Thyroid gland (tissue), 4 donors: ENCODE measurements at regions of chr12 and their contacts with region 1.

Region 1: DNA sequence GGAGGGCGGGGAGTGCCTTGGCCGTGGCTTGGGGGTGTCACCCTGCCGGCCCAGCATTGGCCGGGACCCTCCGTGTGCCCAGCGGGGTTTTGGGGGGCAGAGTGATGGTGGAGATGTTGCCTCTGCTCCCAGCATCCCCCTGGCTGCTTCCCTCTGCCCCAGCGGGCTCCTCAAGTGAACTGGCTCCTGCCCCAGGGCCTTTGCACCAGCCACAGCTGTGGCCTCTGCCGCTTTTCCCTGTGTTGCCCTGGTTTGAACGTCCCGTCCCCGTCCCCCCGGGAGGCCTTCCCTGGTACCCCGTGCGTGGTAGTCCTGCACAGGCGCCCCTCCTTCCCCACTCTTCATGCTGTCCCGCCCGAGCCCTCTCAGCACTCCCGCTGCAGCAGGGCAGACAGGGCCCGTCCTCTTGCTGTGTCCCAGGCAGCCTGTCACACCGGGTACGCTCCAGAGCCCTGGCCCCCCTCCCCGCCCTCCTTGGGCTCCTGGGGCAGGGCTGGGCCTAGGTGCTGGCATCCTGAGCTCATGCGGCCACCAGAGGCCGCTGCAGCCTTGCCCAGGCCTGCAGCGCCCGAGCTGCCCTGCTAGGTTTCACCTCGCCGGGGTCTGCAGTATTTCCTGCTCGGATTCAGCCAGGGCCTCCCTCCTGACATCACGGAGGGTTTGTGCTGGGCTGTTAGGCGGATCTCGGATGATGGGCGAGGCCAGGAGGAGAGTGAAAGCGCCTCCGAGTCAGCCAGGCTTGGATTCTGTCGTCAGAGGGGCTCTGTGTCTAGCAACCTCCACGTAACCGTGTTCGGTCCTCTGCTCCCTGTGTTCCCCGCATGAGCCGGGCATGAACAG is 9.5 kb downstream of the NOC4L start:
- DNase-seq: peak; percentile 86 to 89
- H3K4me3 ChIP-seq: peak overlapping the region in 1 of 3 donors; percentile 10
- H3K27ac ChIP-seq: no peak overlapping the region
- H3K4me1 ChIP-seq: peaks cover 0 to 8% of the 10 kb centered on the region in 2 donors
- H3K27me3 ChIP-seq: no peaks in the 10 kb centered on the region
- CTCF ChIP-seq: peak; percentile 87 to 98 (median 93)
- POLR2A ChIP-seq: no peak

Region 2: GRCh38 chr12:132285991-132286681 is 132.4 kb after region 1 on chr12:
- intact Hi-C with region 1: no loop called
- DNase-seq: peak; percentile 96
- H3K4me3 ChIP-seq: no peak overlapping the region
- H3K27ac ChIP-seq: peak overlapping the region in 2 of 3 donors; percentile 46 to 66
- H3K4me1 ChIP-seq: peaks cover 16 to 45% of the 10 kb centered on the region in 2 donors
- H3K27me3 ChIP-seq: no peaks in the 10 kb centered on the region
- CTCF ChIP-seq: no peak
- POLR2A ChIP-seq: no peak

Region 3: DNA sequence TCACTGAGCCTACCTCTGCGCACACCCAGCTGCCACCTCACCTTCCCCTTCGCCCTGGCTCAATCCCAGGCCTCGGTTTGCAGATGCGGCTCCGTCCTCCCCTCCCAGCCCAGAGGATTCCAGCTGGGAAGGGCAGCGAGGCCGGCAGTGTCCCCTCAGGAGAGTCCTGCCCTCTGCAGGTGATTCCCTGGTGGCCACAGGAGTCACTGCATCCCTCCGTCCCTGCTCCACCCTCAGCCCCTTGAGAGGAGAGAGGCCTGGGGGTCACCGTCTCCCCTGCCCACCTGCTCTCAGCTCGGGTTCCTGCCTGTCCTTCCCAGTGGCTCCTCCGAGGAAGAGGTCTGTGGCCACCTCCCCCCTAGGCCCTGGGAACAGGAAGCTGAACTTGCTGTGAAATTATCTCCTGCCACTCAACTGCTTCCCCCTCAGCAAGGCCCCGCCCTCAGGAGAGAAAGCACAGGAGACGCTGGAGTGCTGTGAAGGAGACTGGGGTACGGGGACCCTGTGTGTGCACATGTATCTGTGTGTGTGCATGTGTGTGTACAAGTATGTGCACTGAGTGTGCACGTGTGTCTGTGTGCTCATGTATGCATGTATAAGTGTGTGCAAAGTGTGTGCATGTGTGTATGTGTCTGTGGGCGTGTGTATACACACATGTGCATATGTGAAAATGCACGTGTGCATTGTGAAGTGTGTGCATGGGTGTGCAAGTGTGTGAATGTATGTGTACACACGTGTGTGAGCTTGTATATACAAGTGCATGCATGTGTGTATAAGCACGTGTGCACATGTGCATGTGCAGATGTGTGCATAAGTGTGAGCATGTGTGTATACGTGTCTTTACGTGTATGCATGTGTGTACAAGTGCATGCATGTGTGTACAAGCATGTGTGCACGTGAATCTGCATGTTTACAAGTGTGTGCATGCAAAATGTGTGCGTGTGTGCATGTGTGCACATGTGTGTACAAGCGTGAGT is 188.8 kb after region 1 on chr12:
- intact Hi-C with region 1: loop called (anchors 5 kb)
- DNase-seq: peak in 1 of 2 donors; percentile 22
- H3K4me3 ChIP-seq: no peak overlapping the region
- H3K27ac ChIP-seq: no peak overlapping the region
- H3K4me1 ChIP-seq: no peaks in the 10 kb centered on the region
- H3K27me3 ChIP-seq: no peaks in the 10 kb centered on the region
- CTCF ChIP-seq: peak in 4 of 6 experiments; percentile 46 to 67 (median 58)
- POLR2A ChIP-seq: no peak

Region 4: DNA sequence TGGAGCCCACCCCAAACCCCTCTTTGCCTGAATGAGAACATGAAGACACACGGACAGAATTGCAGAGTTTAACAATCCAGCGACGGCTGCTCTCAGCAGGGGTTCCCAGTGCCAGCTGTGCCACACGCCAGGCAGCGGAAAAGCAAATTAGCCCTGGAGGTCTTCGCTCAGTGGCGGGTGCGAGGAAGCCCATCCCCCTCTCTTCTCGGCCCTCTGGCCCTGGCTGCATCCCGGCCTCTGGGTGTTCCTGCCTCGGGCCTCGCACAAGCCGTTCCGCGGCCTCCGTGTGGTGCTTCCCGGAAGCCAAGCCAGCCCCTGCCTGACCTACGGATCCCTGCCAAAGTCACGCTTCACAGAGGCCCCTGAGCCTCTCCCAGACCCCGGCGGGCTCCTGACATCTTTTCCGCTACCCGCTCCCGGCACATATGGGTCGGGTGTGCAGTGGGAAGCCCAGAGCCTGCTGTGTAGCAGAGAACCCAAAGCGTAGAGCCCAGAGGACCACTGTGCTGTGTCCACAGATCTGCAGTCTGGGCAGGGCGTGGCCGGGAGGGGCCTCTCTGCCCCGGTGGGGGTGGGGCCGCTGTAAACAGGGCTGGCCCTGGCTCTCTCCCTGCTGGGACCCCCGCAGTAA is 246.4 kb after region 1 on chr12:
- intact Hi-C with region 1: loop called (anchors 10 kb)
- DNase-seq: no peak
- H3K4me3 ChIP-seq: no peak overlapping the region
- H3K27ac ChIP-seq: no peak overlapping the region
- H3K4me1 ChIP-seq: no peaks in the 10 kb centered on the region
- H3K27me3 ChIP-seq: no peaks in the 10 kb centered on the region
- CTCF ChIP-seq: no peak
- POLR2A ChIP-seq: no peak

Region 5: DNA sequence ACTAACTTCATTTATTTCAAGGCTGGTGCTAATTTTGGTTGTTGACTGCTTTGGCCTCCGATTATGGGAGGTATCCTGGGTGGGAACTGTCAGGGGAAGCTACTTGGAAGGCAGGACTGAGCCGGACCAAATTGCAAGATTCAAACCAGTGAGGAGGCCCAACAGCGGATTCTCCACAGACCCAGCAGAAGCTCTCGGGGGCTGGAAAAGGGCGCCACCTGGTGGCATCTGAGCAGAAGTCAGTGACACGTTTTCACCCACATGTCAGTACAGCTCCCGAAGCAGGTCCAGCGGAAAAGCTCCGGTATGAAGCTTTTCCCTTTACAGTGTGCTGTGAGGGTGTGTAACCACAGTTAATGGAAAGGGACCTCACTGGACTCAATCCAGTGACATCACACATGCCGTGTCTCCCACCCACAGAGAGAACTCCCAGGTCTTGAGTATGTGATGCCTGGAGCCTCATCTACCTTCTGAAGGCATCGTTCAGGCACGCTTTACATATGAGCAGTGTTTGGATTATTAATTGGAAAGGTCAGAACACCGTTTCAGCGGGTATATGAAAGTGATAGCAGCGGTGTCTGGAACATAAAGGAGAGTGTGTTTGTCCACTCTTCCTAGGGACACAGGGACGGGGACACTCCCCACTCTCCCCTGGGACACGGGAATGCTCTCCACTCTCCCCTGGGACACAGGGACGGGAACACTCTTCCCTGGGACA is 461.3 kb after region 1 on chr12:
- intact Hi-C with region 1: loop called (anchors 10 kb)
- DNase-seq: peak; percentile 76 to 84
- H3K4me3 ChIP-seq: no peak overlapping the region
- H3K27ac ChIP-seq: no peak overlapping the region
- H3K4me1 ChIP-seq: peaks cover 5 to 11% of the 10 kb centered on the region in 2 donors
- H3K27me3 ChIP-seq: peaks cover 25% of the 10 kb centered on the region
- CTCF ChIP-seq: peak; percentile 41 to 82 (median 70)
- POLR2A ChIP-seq: no peak